Heart right ventricle (tissue), 16 donors: ENCODE measurements at regions of chr1 and their contacts with region 1.

Region 1: DNA sequence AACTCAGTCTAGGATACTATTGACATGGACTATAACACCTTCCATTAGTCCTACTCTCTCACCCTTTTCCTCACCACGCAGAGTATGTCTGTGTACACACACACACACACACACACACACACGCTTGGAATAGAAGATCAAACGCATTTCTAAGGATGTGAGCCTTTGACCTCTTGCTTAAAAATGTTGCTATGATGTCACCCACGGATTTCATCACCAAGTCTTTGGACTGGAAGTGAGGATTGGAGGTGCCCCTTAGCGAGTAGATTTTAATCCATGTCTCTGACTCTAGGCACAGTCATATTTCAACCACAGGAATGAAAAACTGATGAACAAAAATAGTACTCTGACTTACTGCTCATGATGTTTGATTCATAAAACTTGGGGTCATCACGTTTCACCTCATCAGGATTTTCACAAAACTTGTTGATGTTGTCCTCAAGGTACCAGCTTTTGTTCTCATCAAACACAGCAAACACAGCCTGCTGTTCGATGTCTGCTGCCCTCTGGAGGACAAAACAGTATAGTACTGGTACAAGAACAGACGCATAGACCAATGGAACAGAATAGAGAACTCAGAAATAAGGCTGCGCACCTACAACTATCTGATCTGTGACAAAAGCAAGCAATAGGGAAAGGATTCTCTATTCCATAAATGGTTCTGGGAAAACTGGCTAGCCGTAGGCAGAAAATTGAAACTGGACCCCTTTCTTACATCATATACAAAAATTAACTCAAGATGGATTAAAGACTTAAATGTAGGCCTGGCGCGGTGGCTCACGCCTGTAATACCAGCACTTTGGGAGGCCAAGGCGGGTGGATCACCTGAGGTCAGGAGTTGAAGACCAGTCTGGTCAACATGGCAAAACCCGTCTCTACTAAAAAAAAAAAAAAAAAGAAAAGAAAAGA is 39.9 kb downstream of the F5 start:
- DNase-seq: peak in 1 of 2 donors; percentile 65
- ATAC-seq: peak in 7 of 8 donors; percentile 63 to 90 (median 78)
- H3K4me3 ChIP-seq: no peak overlapping the region
- H3K27ac ChIP-seq: no peak overlapping the region
- H3K4me1 ChIP-seq: no peaks in the 10 kb centered on the region
- H3K27me3 ChIP-seq: peaks cover 0 to 6% (median 0%) of the 10 kb centered on the region in 7 donors
- CTCF ChIP-seq: peak; percentile 54 to 86 (median 80)

Region 2: DNA sequence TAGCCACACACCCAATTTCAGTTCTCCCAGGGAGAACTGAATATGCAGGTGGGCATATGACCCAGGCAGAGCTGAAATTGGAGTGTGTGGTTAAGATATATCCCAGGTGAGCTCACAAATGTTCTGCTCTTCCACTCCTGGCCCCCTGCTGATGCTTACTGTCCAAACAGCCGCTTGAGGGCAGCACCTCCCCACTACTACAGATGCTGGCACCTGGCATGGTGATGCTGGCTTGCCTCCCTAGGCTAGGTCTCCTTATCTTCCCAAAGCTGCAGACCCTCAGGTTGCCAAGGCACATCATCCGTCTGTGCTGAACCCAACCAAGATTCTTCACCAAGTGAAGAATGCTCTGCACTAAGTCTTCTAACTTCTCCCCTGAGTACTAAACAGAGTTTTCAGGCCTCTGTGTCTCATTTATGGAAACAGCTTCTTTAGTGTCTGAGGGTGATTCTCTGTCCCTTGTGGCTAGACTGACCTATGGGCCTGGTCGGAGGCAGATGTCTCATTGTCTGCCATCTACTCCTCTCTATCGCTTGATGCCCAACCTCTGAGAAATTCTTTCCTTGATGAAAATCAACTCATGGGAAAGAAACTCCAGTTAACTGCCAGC is 942.7 kb before region 1 on chr1:
- intact Hi-C with region 1: loop called in 4 of 10 experiments (anchors 5 to 10 kb)
- DNase-seq: peak; percentile 78
- ATAC-seq: peak; percentile 82 to 93 (median 88)
- H3K4me3 ChIP-seq: no peak overlapping the region
- H3K27ac ChIP-seq: no peak overlapping the region
- H3K4me1 ChIP-seq: peaks cover 0 to 15% (median under 1%) of the 10 kb centered on the region in 9 donors
- H3K27me3 ChIP-seq: no peaks in the 10 kb centered on the region
- CTCF ChIP-seq: peak; percentile 65 to 93 (median 88)

Region 3: GRCh38 chr1:168609133-168609715 is 937.1 kb before region 1 on chr1:
- intact Hi-C with region 1: loop called in 3 of 10 experiments (anchors 5 to 10 kb)
- DNase-seq: peak; percentile 27 to 50
- ATAC-seq: peak; percentile 39 to 70 (median 64)
- H3K4me3 ChIP-seq: peak overlapping the region in 1 of 10 donors; percentile 9
- H3K27ac ChIP-seq: peak overlapping the region in 7 of 10 donors; percentile 37 to 64 (median 44)
- H3K4me1 ChIP-seq: peaks cover 3 to 34% (median 23%) of the 10 kb centered on the region in 9 donors
- H3K27me3 ChIP-seq: no peaks in the 10 kb centered on the region
- CTCF ChIP-seq: no peak

Region 4: GRCh38 chr1:169466259-169467230 is 79.8 kb before region 1 on chr1:
- intact Hi-C with region 1: loop called in 9 of 10 experiments (anchors 2 to 10 kb)
- DNase-seq: no peak
- ATAC-seq: peak in 1 of 8 donors; percentile 41
- H3K4me3 ChIP-seq: no peak overlapping the region
- H3K27ac ChIP-seq: no peak overlapping the region
- H3K4me1 ChIP-seq: no peaks in the 10 kb centered on the region
- H3K27me3 ChIP-seq: no peaks in the 10 kb centered on the region
- CTCF ChIP-seq: peak in 7 of 9 donors; percentile 36 to 55 (median 51)

Region 5: DNA sequence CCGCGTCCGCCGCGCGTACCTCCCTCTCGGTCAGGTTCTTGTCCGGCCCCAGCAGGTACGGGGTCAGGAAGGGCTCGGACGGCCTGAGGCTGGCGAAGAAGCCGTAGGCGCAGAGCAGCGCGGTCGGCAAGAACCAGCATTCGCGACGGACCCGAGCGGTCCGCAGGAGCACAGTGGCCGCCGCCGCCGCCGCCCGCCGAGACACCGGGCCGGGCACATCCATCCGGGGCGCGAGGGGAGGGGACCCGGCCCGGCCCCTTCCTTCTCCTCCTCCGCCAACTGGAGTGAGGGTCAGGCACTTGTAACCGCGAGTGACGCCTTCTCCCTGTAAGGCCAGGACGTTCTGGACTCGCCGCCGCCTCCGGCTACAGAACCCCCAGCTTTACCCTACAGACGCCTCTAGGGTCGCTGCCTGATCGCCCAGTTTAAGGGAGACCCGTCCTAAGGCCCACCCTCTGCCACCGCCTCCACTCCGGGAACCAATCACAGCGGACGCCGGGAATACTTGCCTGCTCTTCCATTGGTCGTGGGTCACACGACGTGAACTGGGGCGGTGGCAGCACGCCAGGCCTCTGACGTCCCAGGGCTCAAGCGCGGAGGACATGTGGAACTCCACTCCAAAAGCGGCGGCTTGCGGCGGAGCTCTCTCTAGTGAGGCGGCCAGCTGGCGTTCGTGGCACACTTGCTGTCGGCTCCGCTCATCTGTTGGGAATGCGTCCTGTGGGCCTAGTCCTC is 60.6 kb before region 1 on chr1 and contains the start of gene SLC19A2:
- intact Hi-C with region 1: loop called in 1 of 10 experiments (anchors 1 kb)
- DNase-seq: peak; percentile 99 to 100
- ATAC-seq: peak; percentile 96 to 99 (median 98)
- H3K4me3 ChIP-seq: peak within 1 kb of the TSS; percentile 72 to 92 (median 86)
- H3K27ac ChIP-seq: peak within 1 kb of the TSS; percentile 92 to 99 (median 96)
- H3K4me1 ChIP-seq: peaks cover 0 to 45% (median 21%) of the 10 kb centered on the region in 9 donors
- H3K27me3 ChIP-seq: no peaks in the 10 kb centered on the region
- CTCF ChIP-seq: peak in 8 of 9 donors; percentile 20 to 61 (median 36)
- total RNA-seq, gene SLC19A2: 7.6 to 36.3 (median 16.1) TPM

Region 6: GRCh38 chr1:169495916-169496315 is 50.4 kb before region 1 on chr1:
- intact Hi-C with region 1: no loop called
- DNase-seq: no peak
- ATAC-seq: no peak
- H3K4me3 ChIP-seq: no peak overlapping the region
- H3K27ac ChIP-seq: no peak overlapping the region
- H3K4me1 ChIP-seq: no peaks in the 10 kb centered on the region
- H3K27me3 ChIP-seq: no peaks in the 10 kb centered on the region
- CTCF ChIP-seq: no peak

Region 7: GRCh38 chr1:169653873-169654272 is 107.5 kb after region 1 on chr1:
- intact Hi-C with region 1: no loop called
- DNase-seq: no peak
- ATAC-seq: no peak
- H3K4me3 ChIP-seq: no peak overlapping the region
- H3K27ac ChIP-seq: no peak overlapping the region
- H3K4me1 ChIP-seq: peaks cover 0 to 4% (median 0%) of the 10 kb centered on the region in 9 donors
- H3K27me3 ChIP-seq: peaks cover 0 to 44% (median 19%) of the 10 kb centered on the region in 7 donors
- CTCF ChIP-seq: no peak

Region 8: GRCh38 chr1:169711469-169712281 is 165.3 kb after region 1 on chr1 and contains the start of gene SELL:
- intact Hi-C with region 1: loop called in 6 of 10 experiments (anchors 2 to 5 kb)
- DNase-seq: peak in 1 of 2 donors; percentile 71
- ATAC-seq: peak; percentile 72 to 95 (median 90)
- H3K4me3 ChIP-seq: peak within 1 kb of the TSS in 8 of 10 donors; percentile 6 to 45 (median 30)
- H3K27ac ChIP-seq: peak within 1 kb of the TSS in 1 of 10 donors; percentile 75
- H3K4me1 ChIP-seq: peaks cover 0 to 22% (median 0%) of the 10 kb centered on the region in 9 donors
- H3K27me3 ChIP-seq: peaks cover 0 to 15% (median 4%) of the 10 kb centered on the region in 7 donors
- CTCF ChIP-seq: peak; percentile 64 to 83 (median 75)
- total RNA-seq, gene SELL: 1.3 to 8.5 (median 1.7) TPM

Region 9: GRCh38 chr1:169809370-169810095 is 263.2 kb after region 1 on chr1:
- intact Hi-C with region 1: loop called in 8 of 10 experiments (anchors 2 to 10 kb)
- DNase-seq: peak in 1 of 2 donors; percentile 33
- ATAC-seq: no peak
- H3K4me3 ChIP-seq: no peak overlapping the region
- H3K27ac ChIP-seq: no peak overlapping the region
- H3K4me1 ChIP-seq: no peaks in the 10 kb centered on the region
- H3K27me3 ChIP-seq: no peaks in the 10 kb centered on the region
- CTCF ChIP-seq: peak; percentile 30 to 76 (median 62)